ENCODE measurements at regions of chr16 and their contacts with region 1.

Region 1: GRCh38 chr16:85986931-85987749 is 88.2 kb downstream of the IRF8 start:
- ATAC-seq: peak in 5 of 8 experiments; percentile 13 to 70 (median 58)
- H3K4me3 ChIP-seq: no peak overlapping the region
- H3K27ac ChIP-seq: no peak overlapping the region
- H3K4me1 ChIP-seq: peaks cover 0 to 3% of the 10 kb centered on the region in 2 donors

Region 2: DNA sequence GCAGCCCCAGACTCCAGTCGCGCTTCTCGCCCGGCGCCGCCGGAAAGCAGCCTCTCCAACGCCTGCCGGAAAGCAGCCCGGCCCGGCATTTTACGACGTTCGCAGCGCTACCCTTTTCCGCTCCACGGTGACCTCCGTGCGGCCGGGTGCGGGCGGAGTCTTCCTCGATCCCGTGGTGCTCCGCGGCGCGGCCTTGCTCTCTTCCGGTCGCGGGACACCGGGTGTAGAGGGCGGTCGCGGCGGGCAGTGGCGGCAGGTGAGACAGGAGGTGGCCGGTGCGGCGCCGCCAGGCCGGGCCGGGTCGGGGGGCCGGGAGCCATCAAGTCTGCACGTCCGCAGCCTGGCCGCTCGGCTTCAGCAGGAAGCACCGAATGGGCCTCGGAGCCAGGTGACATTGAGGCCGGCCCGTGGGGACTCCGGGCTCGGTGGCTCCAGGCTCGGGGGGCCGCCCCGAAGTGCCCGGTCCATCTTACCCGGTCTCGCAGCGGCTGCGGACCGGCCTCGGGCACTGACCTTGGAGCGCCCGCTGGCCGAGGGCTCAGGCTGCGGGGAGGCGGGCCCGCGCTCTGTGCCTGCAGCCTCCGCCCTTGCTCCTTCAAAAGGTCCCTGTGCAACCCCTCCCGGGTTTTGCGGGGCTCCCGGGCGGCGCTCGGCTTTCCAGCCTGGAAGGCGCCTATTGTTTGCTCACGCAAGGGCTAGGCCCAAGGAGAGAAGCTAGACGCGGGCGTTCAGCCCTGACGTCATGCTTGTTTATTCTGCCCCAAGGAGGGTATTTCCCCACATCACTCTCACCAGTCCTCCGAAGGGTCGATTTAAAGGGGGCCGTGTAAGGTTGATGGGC is 187.4 kb before region 1 on chr16 and contains the starts of genes COX4I1 and EMC8:
- in situ Hi-C with region 1: loop called in 3 of 9 experiments (anchors 25 kb)
- ATAC-seq: peak; percentile 83 to 94 (median 89)
- H3K4me3 ChIP-seq: peak within 1 kb of the TSS; percentile 53 to 97 (median 67)
- H3K27ac ChIP-seq: peak within 1 kb of the TSS; percentile 83 to 89
- H3K4me1 ChIP-seq: peaks cover 13 to 17% of the 10 kb centered on the region in 2 donors
- total RNA-seq, gene COX4I1: 531 to 741 (median 580) TPM
- total RNA-seq, gene EMC8: 13.5 to 32.5 (median 25.6) TPM

Region 3: GRCh38 chr16:85821441-85822135 is 165.6 kb before region 1 on chr16:
- in situ Hi-C with region 1: loop called in 5 of 9 experiments (anchors 10 to 25 kb)
- ATAC-seq: peak; percentile 73 to 99 (median 96)
- H3K4me3 ChIP-seq: no peak overlapping the region
- H3K27ac ChIP-seq: no peak overlapping the region
- H3K4me1 ChIP-seq: peaks cover 2 to 5% of the 10 kb centered on the region in 2 donors

Region 4: GRCh38 chr16:85935974-85936760 is 51.0 kb before region 1 on chr16:
- in situ Hi-C with region 1: no loop called
- ATAC-seq: no peak
- H3K4me3 ChIP-seq: no peak overlapping the region
- H3K27ac ChIP-seq: no peak overlapping the region
- H3K4me1 ChIP-seq: no peaks in the 10 kb centered on the region